ENCODE measurements at regions of chr7 and their contacts with region 1.

Region 1: GRCh38 chr7:105876091-105876963 is at the start of gene ATXN7L1:
- DNase-seq: peak; percentile 95 to 96 (median 96)
- ATAC-seq: peak; percentile 92 to 97 (median 96)
- H3K4me3 ChIP-seq: peak within 1 kb of the TSS; percentile 66 to 90 (median 84)
- H3K27ac ChIP-seq: peak within 1 kb of the TSS; percentile 65 to 90 (median 84)
- H3K4me1 ChIP-seq: peaks cover 0 to 34% (median 10%) of the 10 kb centered on the region in 12 donors
- H3K27me3 ChIP-seq: peaks cover 0 to 3% (median 0%) of the 10 kb centered on the region in 9 donors
- CTCF ChIP-seq: peak in 11 of 12 donors; percentile 6 to 93 (median 64)
- POLR2A ChIP-seq: peak in 1 of 2 donors; percentile 65
- total RNA-seq, gene ATXN7L1: 2.3 to 10.6 (median 5.6) TPM

Region 2: GRCh38 chr7:105680505-105681187 is 195.7 kb before region 1 on chr7:
- intact Hi-C with region 1: loop called in 1 of 10 experiments (anchors 10 kb)
- DNase-seq: peak in 2 of 5 donors; percentile 48 to 49
- ATAC-seq: peak in 2 of 4 donors; percentile 20 to 45
- H3K4me3 ChIP-seq: no peak overlapping the region
- H3K27ac ChIP-seq: peak overlapping the region in 5 of 12 donors; percentile 37 to 44 (median 43)
- H3K4me1 ChIP-seq: peaks cover 0 to 53% (median 25%) of the 10 kb centered on the region in 12 donors
- H3K27me3 ChIP-seq: no peaks in the 10 kb centered on the region
- CTCF ChIP-seq: no peak
- POLR2A ChIP-seq: no peak

Region 3: DNA sequence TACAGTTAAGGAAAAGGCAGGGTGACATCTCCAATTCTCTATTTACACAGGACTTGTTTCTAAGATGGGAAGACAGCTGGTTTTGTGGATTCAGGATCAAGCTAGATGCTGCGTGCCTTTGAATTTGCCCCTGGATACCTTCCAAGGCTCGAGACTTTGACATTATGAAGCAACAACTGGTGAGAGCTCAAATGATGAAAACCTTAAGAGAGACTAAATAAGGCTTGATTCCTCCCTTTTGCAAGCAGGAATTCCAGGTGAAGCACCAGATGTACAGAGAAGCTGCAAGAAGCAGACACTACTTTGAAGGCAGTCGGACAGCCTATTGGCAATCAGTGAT is 81.0 kb before region 1 on chr7:
- intact Hi-C with region 1: loop called in 4 of 10 experiments (anchors 2 to 10 kb)
- DNase-seq: no peak
- ATAC-seq: peak in 1 of 4 donors; percentile 19
- H3K4me3 ChIP-seq: no peak overlapping the region
- H3K27ac ChIP-seq: peak overlapping the region in 5 of 12 donors; percentile 7 to 77 (median 38)
- H3K4me1 ChIP-seq: peaks cover 0 to 31% (median 16%) of the 10 kb centered on the region in 12 donors
- H3K27me3 ChIP-seq: no peaks in the 10 kb centered on the region
- CTCF ChIP-seq: no peak
- POLR2A ChIP-seq: no peak

Region 4: GRCh38 chr7:105808703-105809590 is 67.4 kb before region 1 on chr7:
- intact Hi-C with region 1: loop called in 2 of 10 experiments (anchors 5 to 10 kb)
- DNase-seq: no peak
- ATAC-seq: peak in 3 of 4 donors; percentile 30 to 47 (median 31)
- H3K4me3 ChIP-seq: no peak overlapping the region
- H3K27ac ChIP-seq: peak overlapping the region in 1 of 12 donors; percentile 74
- H3K4me1 ChIP-seq: peaks cover 0 to 42% (median 0%) of the 10 kb centered on the region in 12 donors
- H3K27me3 ChIP-seq: no peaks in the 10 kb centered on the region
- CTCF ChIP-seq: no peak
- POLR2A ChIP-seq: no peak

Region 5: DNA sequence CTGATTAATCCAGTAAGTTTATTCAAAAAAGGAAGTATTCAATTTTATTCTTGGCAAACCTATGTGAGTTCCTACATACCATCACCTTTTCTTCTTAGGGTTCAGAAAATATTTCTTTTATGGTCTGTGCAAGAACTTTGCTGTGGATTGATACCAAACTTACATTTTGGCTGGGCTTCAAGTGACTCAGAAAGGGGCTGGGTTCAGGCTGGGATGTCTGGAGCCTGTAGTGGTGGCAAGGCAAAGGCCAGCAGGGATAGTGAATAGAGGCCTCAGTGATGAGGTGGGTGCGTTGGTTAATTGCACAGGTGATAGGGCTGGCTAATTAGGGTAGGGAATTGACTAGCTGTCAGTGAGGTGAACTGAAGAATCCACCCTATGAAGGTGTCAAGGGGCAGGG is 40.3 kb after region 1 on chr7:
- intact Hi-C with region 1: no loop called
- DNase-seq: no peak
- ATAC-seq: no peak
- H3K4me3 ChIP-seq: no peak overlapping the region
- H3K27ac ChIP-seq: no peak overlapping the region
- H3K4me1 ChIP-seq: no peaks in the 10 kb centered on the region
- H3K27me3 ChIP-seq: no peaks in the 10 kb centered on the region
- CTCF ChIP-seq: no peak
- POLR2A ChIP-seq: no peak

Region 6: GRCh38 chr7:106041140-106041717 is 164.9 kb after region 1 on chr7:
- intact Hi-C with region 1: loop called in 1 of 10 experiments (anchors 2 kb)
- DNase-seq: no peak
- ATAC-seq: peak in 3 of 4 donors; percentile 7 to 23 (median 15)
- H3K4me3 ChIP-seq: no peak overlapping the region
- H3K27ac ChIP-seq: no peak overlapping the region
- H3K4me1 ChIP-seq: peaks cover 0 to 14% (median 4%) of the 10 kb centered on the region in 12 donors
- H3K27me3 ChIP-seq: peaks cover 0 to 3% (median 0%) of the 10 kb centered on the region in 9 donors
- CTCF ChIP-seq: peak; percentile 49 to 79 (median 62)
- POLR2A ChIP-seq: no peak

Region 7: DNA sequence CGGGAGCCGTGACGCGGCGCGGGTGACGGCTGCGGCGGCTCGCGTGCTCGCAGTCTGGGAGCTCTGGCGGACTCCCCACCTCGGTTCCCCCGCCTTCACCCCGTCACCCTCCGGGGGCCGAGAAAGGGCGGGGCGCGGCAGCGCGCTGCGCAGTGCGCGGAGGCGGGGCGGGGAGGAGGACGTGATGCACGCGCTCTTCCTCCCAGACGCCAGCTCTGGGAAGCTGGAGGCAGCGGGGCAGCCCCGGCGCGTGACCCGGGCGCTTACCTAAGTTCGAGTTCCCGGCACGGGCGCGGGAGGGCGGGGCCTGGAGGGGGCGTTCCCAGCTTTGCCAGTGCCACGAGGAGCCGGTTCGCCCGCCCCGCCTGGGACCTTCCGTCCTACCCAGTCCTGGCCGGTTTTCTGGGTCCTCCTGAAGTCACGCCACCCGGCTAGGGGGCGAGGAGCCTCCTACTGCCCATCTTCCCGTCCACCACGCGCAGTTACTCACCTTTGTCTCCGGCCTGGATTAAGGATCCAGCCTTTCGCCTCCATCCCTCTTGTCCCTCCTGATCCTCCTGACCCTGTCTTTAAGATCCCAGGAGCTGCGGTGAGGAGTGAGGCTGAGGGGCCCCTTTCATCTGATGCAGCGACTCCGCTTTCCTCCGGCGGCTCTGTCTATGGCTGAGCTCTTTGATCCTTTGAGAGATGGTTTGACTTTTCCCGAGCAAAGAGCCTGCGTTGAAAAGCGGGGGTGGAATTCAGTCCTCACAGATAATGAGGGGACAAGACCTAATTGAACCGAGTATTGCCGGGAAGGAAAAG is 408.9 kb after region 1 on chr7:
- intact Hi-C with region 1: loop called in 1 of 10 experiments (anchors 5 kb)
- DNase-seq: peak; percentile 96 to 99 (median 97)
- ATAC-seq: peak; percentile 95 to 98 (median 96)
- H3K4me3 ChIP-seq: peak overlapping the region; percentile 46 to 96 (median 78)
- H3K27ac ChIP-seq: peak overlapping the region; percentile 66 to 99 (median 95)
- H3K4me1 ChIP-seq: peaks cover 0 to 41% (median 20%) of the 10 kb centered on the region in 12 donors
- H3K27me3 ChIP-seq: no peaks in the 10 kb centered on the region
- CTCF ChIP-seq: peak in 1 of 12 donors; percentile 5
- POLR2A ChIP-seq: peak in 1 of 2 donors; percentile 75